ENCODE measurements at regions of chr18 and their contacts with region 1.

Region 1: GRCh38 chr18:2953935-2954653 is 58.9 kb downstream of the LPIN2 start:
- DNase-seq: no peak
- H3K4me3 ChIP-seq: no peak overlapping the region
- H3K4me3 Mint-ChIP-seq: no peak overlapping the region
- H3K27ac ChIP-seq: no peak overlapping the region
- H3K27ac Mint-ChIP-seq: peak overlapping the region in 2 of 7 donors; percentile 44 to 48
- H3K4me1 ChIP-seq: peaks cover 17 to 20% of the 10 kb centered on the region in 2 donors
- H3K4me1 Mint-ChIP-seq: peaks cover 23% of the 10 kb centered on the region
- H3K27me3 ChIP-seq: no peaks in the 10 kb centered on the region
- H3K27me3 Mint-ChIP-seq: no peaks in the 10 kb centered on the region
- CTCF ChIP-seq: no peak

Region 2: DNA sequence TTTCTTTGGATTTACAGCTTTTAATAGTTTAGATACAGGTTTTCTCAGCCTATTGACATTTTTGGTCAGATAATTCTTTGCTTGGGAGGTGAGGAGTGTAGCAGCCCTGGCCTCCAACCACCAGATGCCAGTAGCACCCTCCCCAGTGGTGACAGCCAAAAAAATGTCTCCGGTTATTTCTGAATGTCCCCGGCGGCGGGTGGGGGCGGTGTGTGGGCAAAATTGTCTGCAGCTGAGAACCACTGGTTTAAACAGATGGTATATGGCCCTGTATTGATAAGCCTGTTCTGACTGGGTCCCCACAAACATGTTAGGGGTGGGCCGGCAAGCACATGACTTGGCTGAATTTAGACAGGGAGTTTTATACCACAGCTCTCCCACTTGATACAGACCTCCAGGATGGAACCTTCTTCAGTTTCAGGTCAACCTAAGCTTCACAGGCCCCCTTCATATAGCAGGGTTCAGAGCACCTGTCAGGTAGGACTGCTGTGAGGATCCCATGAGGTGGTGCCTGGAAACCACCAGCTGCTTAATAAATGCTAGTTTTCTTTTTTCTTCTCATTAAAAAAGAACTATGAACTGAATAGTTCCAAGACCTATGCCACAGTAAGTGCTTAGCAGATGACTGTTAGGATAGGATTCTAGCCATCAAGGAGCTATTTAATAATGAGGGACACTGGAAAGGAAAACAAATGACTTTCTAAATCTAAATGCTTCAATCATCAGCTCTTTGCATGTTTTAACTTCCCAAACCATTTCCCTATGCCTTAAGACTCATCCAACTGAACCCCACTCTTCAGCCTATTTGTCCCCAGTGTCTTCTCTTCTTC is 40.7 kb after region 1 on chr18:
- intact Hi-C with region 1: loop called in 1 of 2 experiments (anchors 5 kb)
- DNase-seq: peak; percentile 50 to 61 (median 57)
- H3K4me3 ChIP-seq: no peak overlapping the region
- H3K4me3 Mint-ChIP-seq: peak overlapping the region in 1 of 2 donors; percentile 71
- H3K27ac ChIP-seq: no peak overlapping the region
- H3K27ac Mint-ChIP-seq: peak overlapping the region in 4 of 7 donors; percentile 0 to 61 (median 47)
- H3K4me1 ChIP-seq: peaks cover 18 to 28% of the 10 kb centered on the region in 2 donors
- H3K4me1 Mint-ChIP-seq: peaks cover 45% of the 10 kb centered on the region
- H3K27me3 ChIP-seq: no peaks in the 10 kb centered on the region
- H3K27me3 Mint-ChIP-seq: no peaks in the 10 kb centered on the region
- CTCF ChIP-seq: peak; percentile 77

Measured in CD14-positive monocyte (primary cell).